GM12878 (cell line): ENCODE measurements at regions of chr16 and their contacts with region 1.

Region 1: DNA sequence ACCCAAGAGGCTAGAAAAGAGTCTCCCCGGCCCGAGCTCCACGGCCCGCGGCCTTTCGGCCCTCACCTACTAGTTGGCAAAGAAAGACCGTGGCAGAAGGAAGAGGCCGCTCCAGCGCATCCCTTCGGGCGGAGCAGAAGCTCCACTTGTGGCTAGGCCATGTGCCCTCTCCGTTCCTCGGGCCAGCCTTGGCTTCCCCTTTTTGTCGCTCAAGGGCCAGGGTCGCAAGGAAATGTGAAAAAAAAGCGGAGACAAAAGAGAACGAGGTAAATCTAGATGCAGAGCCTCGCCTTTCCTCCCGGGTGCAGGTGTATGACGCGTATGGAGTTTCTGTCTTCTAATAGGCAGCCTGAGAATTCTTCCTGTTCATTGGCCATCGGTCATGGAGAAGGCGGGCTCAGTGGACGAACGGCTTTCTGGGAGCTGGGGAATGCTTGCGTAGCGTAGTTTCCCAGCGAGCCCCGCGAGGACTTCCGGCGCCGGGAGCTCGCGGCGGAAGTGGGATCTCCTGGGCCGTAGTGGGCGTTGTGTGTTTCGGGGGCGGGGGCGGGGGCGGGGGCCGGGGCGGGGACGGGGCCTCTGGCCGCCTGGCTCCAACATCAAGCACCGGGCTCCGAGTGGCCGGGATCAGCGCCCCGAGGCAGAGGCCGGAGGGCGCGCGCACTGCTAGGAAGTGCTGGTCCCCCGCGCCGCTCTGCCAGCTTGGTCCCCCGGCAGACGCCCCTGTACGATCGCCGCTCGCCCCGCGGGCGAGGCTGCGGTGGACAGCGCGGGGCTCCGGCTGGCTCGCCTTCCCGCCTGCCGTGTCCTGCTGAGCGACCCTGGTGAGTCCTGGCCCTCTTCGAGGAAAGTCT is at the start of gene ZNF213:
- DNase-seq: peak; percentile 95
- ATAC-seq: peak; percentile 97
- H3K4me3 ChIP-seq: peak within 1 kb of the TSS; percentile 99
- H3K27ac ChIP-seq: peak within 1 kb of the TSS; percentile 95
- H3K4me1 ChIP-seq: peaks cover 5% of the 10 kb centered on the region; the same call in 1 of the 2 replicates
- H3K27me3 ChIP-seq: no peaks in the 10 kb centered on the region
- CTCF ChIP-seq: no peak
- EP300 ChIP-seq: no peak
- POLR2A ChIP-seq: peak; percentile 83
- RAD21 ChIP-seq: no peak
- polyA plus RNA-seq, gene ZNF213: 0.55 to 0.58 TPM

Region 2: GRCh38 chr16:1923299-1924034 is 1211.3 kb before region 1 on chr16:
- CTCF ChIA-PET with region 1: no interaction called
- POLR2A ChIA-PET with region 1: no interaction called
- RAD21 ChIA-PET with region 1: no interaction called
- SMC1A ChIA-PET with region 1: no interaction called
- in situ Hi-C with region 1: no loop called
- intact Hi-C with region 1: no loop called
- DNase-seq: no peak
- ATAC-seq: peak; percentile 23; the same call in 2 of the 3 replicates
- H3K4me3 ChIP-seq: no peak overlapping the region
- H3K27ac ChIP-seq: no peak overlapping the region
- H3K4me1 ChIP-seq: no peaks in the 10 kb centered on the region
- H3K27me3 ChIP-seq: peaks cover 0 to 3% of the 10 kb centered on the region in 2 experiments; a peak in 3 of 4 replicates
- CTCF ChIP-seq: peak in 2 of 3 experiments; percentile 21 to 28; a peak in 1 of 6 replicates
- EP300 ChIP-seq: no peak
- POLR2A ChIP-seq: no peak
- RAD21 ChIP-seq: no peak

Region 3: DNA sequence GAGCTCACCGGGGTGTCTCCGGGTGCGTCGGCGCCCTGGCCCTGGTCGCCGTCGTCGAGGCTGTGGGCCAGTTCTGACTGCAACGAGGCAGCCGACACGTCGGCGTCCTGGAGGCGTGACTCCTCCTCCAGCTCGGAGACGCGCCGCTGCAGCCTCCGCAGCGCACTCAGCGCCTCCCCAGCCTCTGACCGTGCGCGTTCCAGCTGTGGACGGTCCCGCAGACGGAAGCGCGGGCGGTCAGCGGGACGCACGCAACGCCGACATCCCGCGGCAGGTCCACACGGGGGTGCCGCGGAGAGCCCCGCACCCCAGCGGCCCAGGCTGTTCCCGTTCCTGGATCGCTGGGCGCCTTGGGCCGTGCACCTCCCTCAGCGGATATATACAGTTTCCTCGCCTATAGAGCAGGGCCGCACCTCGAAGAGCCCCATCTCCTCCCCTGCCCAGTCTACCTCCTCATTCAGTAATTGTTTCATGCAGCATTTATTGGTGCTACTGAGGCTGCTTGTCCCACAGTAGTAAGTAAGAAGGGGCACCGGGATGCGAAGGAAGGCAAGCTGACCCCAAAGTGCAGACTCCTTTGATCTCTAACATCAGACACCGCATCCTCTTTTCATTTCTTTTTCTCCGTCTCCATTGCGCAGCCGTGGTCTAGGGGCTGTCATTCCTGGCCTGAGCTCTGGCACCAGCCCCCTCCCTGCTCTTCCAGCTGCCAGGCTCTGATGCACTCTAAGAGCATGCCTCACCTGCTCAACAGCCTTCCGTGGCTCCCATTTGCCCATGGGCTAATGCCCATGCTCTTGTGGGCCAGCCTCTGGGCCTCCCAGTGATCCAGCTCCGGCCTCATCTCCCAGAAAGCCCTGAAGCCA is 105.0 kb before region 1 on chr16:
- CTCF ChIA-PET with region 1: interaction called, 143 read pairs
- POLR2A ChIA-PET with region 1: interaction called, 3 read pairs
- RAD21 ChIA-PET with region 1: interaction called, 32 read pairs
- SMC1A ChIA-PET with region 1: interaction called, 36 read pairs
- in situ Hi-C with region 1: no loop called
- intact Hi-C with region 1: loop called (anchors 1 kb)
- DNase-seq: no peak
- ATAC-seq: no peak
- H3K4me3 ChIP-seq: no peak overlapping the region
- H3K27ac ChIP-seq: no peak overlapping the region
- H3K4me1 ChIP-seq: peaks cover 6% of the 10 kb centered on the region
- H3K27me3 ChIP-seq: peaks cover 7 to 8% of the 10 kb centered on the region in 2 experiments
- CTCF ChIP-seq: no peak
- EP300 ChIP-seq: no peak
- POLR2A ChIP-seq: peak; percentile 22; the same call in 1 of the 2 replicates
- RAD21 ChIP-seq: no peak

Region 4: GRCh38 chr16:3150346-3151218 is 15.8 kb after region 1 on chr16:
- CTCF ChIA-PET with region 1: interaction called, 24 read pairs
- POLR2A ChIA-PET with region 1: interaction called, 13 read pairs
- RAD21 ChIA-PET with region 1: interaction called, 9 read pairs
- SMC1A ChIA-PET with region 1: interaction called, 12 read pairs
- in situ Hi-C with region 1: no loop called
- intact Hi-C with region 1: no loop called
- DNase-seq: peak; percentile 95
- ATAC-seq: peak; percentile 91
- H3K4me3 ChIP-seq: peak overlapping the region; percentile 94
- H3K27ac ChIP-seq: peak overlapping the region; percentile 70
- H3K4me1 ChIP-seq: peaks cover 3% of the 10 kb centered on the region; the same call in 1 of the 2 replicates
- H3K27me3 ChIP-seq: no peaks in the 10 kb centered on the region
- CTCF ChIP-seq: no peak
- EP300 ChIP-seq: peak in 1 of 2 experiments; percentile 65; a peak in 1 of 4 replicates
- POLR2A ChIP-seq: no peak
- RAD21 ChIP-seq: no peak

Region 5: GRCh38 chr16:3266873-3267537 is 132.2 kb after region 1 on chr16:
- CTCF ChIA-PET with region 1: no interaction called
- POLR2A ChIA-PET with region 1: no interaction called
- RAD21 ChIA-PET with region 1: no interaction called
- SMC1A ChIA-PET with region 1: no interaction called
- in situ Hi-C with region 1: no loop called
- intact Hi-C with region 1: no loop called
- DNase-seq: no peak
- ATAC-seq: no peak
- H3K4me3 ChIP-seq: no peak overlapping the region
- H3K27ac ChIP-seq: no peak overlapping the region
- H3K4me1 ChIP-seq: peaks cover 8% of the 10 kb centered on the region; the same call in 1 of the 2 replicates
- H3K27me3 ChIP-seq: no peaks in the 10 kb centered on the region
- CTCF ChIP-seq: peak; percentile 24 to 45 (median 38); a peak in 4 of 6 replicates
- EP300 ChIP-seq: no peak
- POLR2A ChIP-seq: no peak
- RAD21 ChIP-seq: peak; percentile 25; the same call in 1 of the 2 replicates